Dorsolateral prefrontal cortex (tissue), 120 donors: ENCODE measurements at regions of chr9 and their contacts with region 1.

Region 1: GRCh38 chr9:130138171-130138653 is 34.0 kb upstream of the NCS1 start:
- DNase-seq: peak in 1 of 10 donors; percentile 26
- H3K4me3 ChIP-seq: peak overlapping the region in 2 of 59 donors; percentile 1 to 15
- H3K27ac ChIP-seq: peak overlapping the region in 57 of 59 donors; percentile 5 to 88 (median 71)
- H3K27me3 ChIP-seq: no peaks in the 10 kb centered on the region
- CTCF ChIP-seq: no peak

Region 2: GRCh38 chr9:130073373-130073772 is 64.8 kb before region 1 on chr9:
- intact Hi-C with region 1: loop called in 1 of 2 experiments (anchors 10 kb)
- DNase-seq: no peak
- H3K4me3 ChIP-seq: no peak overlapping the region
- H3K27ac ChIP-seq: peak overlapping the region in 4 of 59 donors; percentile 2 to 34 (median 14)
- H3K27me3 ChIP-seq: no peaks in the 10 kb centered on the region
- CTCF ChIP-seq: no peak

Region 3: DNA sequence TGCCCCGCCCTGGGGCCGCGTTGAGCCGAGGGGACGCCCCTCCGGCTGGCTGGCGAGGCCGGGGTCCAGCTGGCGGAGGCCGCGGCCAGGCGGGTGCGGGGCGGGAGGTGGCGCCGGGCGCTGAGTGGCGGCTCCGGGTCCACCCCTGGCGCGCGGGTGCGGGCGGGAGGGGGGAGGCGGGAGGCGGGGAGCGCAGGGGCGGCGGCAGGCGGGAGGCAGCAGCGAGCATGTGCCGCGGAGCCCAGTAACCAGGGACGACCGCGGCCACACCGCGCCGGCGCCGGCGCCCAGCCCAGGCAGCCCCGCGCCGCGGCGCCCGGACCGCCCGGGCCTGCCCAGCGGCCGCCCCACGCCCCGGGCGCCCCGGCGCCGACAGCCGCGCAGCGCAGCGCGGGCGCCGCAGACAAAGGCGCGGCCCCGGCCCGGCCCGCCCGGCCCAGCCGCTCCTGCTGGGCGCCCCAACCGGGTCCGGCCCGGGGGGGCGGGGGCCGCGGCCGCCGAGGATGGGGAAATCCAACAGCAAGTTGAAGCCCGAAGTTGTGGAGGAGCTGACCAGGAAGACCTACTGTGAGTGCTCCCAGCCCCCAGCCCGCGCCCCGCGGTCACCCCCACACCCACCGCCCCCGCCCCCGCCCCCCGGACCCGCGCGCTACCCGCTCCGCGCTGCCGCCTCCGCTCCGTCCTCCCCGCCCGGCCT is 34.1 kb after region 1 on chr9 and contains the start of gene NCS1:
- intact Hi-C with region 1: loop called (anchors 5 kb)
- DNase-seq: peak; percentile 64 to 89 (median 81)
- H3K4me3 ChIP-seq: peak within 1 kb of the TSS; percentile 54 to 80 (median 68)
- H3K27ac ChIP-seq: peak within 1 kb of the TSS; percentile 47 to 93 (median 86)
- H3K27me3 ChIP-seq: no peaks in the 10 kb centered on the region
- CTCF ChIP-seq: no peak
- total RNA-seq, gene NCS1: 134 to 718 (median 501) TPM